ENCODE measurements at regions of chr6 and their contacts with region 1.

Region 1: DNA sequence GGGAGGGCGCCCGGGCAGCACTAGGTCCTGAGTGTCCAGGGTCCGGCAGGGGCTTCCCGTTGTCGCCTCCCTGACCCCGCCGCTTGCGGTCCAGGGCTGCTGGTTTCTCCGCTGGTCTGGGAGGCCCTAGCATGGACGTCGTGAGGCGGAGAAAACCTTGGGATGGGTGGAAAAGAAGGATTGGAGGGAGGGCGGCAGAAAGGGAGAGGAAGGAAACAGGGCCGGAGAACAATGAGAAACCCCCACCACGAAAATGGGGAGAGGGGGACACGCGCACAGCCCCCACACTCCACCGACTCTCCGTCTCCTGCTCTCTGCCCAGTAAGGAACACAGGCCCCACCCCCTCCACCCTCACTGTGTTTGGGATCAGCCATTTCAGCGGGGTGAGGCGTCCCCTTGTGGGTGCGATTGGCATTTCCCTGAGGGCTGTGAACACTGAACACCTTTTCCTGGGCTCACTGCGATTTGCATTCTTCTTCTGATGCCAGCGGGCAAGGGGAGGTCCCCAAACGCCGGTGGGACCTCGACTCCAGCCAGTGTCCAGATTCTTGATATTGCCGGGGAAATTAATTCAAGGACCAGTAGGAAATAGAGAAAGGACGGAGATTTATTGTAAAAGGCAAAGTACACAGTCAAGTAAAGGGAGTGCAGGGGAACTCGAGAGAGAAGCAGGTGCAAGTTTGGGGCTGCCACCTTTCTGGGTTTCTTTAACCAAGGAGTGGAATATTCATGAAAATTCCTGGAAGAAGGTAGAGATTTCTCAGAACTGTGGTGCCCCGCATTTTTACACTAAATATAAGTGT is 3.3 kb upstream of the RAET1G start:
- DNase-seq: peak; percentile 66
- ATAC-seq: peak; percentile 84
- H3K4me3 ChIP-seq: peak overlapping the region; percentile 32
- H3K27ac ChIP-seq: no peak overlapping the region
- H3K4me1 ChIP-seq: peaks cover 2% of the 10 kb centered on the region; the same call in 1 of the 2 replicates
- H3K27me3 ChIP-seq: peaks cover 13% of the 10 kb centered on the region
- CTCF ChIP-seq: peak; percentile 92
- POLR2A ChIP-seq: no peak
- RAD21 ChIP-seq: peak; percentile 92

Region 2: DNA sequence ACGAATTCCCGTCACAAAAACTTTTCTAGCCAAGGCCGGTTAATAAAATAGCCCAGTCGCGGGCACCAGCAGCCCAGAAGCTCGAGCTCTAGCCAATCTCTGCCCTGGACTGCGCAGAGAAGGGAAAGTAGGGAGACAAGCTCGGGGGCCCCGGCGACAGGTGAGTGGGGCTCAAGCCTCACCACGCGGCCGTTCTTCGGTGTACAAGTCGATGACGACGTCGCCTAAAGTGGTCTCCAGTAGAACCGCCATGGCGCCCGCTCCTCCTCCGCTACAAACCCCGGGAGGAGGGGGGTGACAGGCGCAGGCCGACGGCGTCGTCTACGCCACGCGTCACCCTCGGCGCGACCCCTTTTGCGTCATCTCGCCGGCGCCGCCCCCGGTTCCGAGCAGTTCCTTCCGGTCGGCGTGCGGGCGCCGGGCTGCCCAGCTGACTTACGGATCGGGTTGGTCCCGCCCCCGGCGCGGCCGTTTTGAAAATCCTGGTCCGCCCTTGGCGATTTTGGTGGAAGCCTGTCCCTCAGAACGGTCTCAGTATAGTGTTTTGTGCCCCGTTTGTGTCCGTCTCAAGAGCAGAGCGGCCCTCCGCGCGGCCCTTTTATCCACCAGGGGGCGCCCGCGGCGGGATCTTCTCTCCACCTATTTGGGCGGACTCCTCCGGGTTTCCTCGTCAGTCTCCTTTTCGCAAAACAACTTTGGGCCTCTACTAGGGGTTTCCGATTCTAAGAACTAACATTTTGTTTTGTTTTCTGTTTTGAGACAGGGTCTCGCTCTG is 380.2 kb before region 1 on chr6 and contains the start of gene PPIL4:
- CTCF ChIA-PET with region 1: no interaction called
- POLR2A ChIA-PET with region 1: no interaction called
- dilution Hi-C with region 1: no loop called
- in situ Hi-C with region 1: loop called (anchors 10 kb)
- intact Hi-C with region 1: loop called (anchors 1 kb)
- DNase-seq: peak; percentile 94
- ATAC-seq: peak; percentile 93
- H3K4me3 ChIP-seq: peak within 1 kb of the TSS; percentile 79
- H3K27ac ChIP-seq: peak within 1 kb of the TSS; percentile 85
- H3K4me1 ChIP-seq: no peaks in the 10 kb centered on the region; the same call in 1 of the 2 replicates
- H3K27me3 ChIP-seq: peaks cover 3% of the 10 kb centered on the region
- CTCF ChIP-seq: peak; percentile 66
- POLR2A ChIP-seq: peak; percentile 81; the same call in 1 of the 2 replicates
- RAD21 ChIP-seq: peak; percentile 46
- total RNA-seq, gene PPIL4: 13.3 and 29.7 TPM in 2 replicates

Region 3: DNA sequence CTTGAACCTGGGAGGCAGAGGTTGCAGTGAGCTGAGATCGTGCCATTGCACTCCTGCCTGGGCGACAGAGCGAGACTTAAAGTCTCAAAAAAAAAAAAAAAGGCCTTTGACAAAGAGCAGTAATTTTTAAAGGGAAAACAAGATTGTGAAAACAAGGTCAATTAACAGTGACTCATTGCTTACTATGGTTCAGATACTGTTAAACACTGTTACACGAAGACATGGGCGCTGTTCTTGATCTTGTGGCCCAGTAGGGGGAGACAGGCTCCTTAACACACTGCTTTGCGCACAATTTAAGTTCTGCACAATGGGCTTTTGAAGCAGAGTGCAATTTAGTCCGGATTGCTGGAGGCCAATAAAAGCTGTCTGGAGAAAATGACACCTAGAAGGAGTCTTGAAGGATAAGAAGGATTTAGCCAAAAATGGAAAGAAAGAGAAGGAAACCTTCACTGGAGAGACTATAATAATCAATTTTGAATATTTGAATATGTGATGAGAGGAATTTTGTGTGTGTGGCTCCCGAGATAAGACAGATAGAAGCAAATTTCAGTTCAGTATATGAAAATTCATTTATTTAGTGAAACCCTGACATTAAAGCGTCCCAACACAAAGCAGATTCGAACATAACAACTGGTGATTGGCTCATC is 202.3 kb before region 1 on chr6:
- CTCF ChIA-PET with region 1: no interaction called
- POLR2A ChIA-PET with region 1: no interaction called
- dilution Hi-C with region 1: no loop called
- in situ Hi-C with region 1: loop called (anchors 10 kb)
- intact Hi-C with region 1: loop called (anchors 1 kb)
- DNase-seq: peak; percentile 79
- ATAC-seq: peak; percentile 98
- H3K4me3 ChIP-seq: no peak overlapping the region
- H3K27ac ChIP-seq: no peak overlapping the region
- H3K4me1 ChIP-seq: no peaks in the 10 kb centered on the region
- H3K27me3 ChIP-seq: no peaks in the 10 kb centered on the region
- CTCF ChIP-seq: peak; percentile 70
- POLR2A ChIP-seq: no peak
- RAD21 ChIP-seq: peak; percentile 69

Region 4: DNA sequence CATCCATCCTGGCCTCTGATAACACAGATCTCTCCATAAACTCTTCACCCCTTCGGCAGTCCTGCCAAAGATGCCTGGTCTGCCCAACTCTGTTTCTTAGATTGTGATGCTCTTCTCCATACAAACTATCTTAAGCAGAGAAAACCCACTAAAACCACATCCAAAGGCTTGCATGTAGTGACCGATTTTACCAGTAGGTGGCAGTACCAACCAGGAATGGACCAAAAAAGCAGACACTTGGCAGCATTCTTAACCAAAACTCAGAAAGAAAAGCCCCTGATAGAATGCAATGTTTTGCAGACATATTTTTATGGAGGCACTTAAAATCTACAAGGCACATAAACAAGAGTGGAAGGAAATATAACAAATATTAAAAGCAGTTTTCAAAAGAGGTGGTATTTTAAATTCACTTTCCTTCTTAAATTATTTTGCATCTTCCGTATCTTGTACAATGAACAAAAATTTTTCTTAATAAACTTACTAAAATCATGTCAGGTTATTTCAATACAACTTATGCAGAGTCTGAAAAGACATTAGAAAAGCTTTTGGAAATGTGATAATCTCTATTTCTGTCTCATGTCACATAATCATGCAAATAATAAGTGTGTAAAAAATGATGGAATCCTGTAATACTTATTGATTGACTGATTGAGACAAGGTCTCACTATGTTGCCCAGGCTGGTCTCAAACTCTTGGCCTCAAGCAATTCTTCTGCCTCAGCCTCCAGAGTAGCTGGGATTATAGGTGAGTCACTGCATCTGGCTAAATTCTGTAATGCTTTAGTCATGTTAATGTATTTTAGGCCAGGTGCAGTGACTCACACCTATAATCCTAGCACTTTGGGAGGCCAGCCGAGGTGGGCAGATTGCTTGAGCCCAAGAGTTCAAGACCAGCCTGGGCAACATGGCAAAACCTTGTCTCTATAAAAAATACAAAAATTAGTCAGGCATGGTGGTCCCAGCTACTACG is 91.4 kb before region 1 on chr6:
- CTCF ChIA-PET with region 1: interaction called, 4 read pairs
- POLR2A ChIA-PET with region 1: no interaction called
- dilution Hi-C with region 1: no loop called
- in situ Hi-C with region 1: loop called (anchors 5 kb)
- intact Hi-C with region 1: loop called (anchors 1 kb)
- DNase-seq: peak; percentile 79
- ATAC-seq: peak; percentile 74
- H3K4me3 ChIP-seq: no peak overlapping the region
- H3K27ac ChIP-seq: no peak overlapping the region
- H3K4me1 ChIP-seq: peaks cover 6% of the 10 kb centered on the region
- H3K27me3 ChIP-seq: no peaks in the 10 kb centered on the region
- CTCF ChIP-seq: peak; percentile 95
- POLR2A ChIP-seq: no peak
- RAD21 ChIP-seq: peak; percentile 94

Region 5: DNA sequence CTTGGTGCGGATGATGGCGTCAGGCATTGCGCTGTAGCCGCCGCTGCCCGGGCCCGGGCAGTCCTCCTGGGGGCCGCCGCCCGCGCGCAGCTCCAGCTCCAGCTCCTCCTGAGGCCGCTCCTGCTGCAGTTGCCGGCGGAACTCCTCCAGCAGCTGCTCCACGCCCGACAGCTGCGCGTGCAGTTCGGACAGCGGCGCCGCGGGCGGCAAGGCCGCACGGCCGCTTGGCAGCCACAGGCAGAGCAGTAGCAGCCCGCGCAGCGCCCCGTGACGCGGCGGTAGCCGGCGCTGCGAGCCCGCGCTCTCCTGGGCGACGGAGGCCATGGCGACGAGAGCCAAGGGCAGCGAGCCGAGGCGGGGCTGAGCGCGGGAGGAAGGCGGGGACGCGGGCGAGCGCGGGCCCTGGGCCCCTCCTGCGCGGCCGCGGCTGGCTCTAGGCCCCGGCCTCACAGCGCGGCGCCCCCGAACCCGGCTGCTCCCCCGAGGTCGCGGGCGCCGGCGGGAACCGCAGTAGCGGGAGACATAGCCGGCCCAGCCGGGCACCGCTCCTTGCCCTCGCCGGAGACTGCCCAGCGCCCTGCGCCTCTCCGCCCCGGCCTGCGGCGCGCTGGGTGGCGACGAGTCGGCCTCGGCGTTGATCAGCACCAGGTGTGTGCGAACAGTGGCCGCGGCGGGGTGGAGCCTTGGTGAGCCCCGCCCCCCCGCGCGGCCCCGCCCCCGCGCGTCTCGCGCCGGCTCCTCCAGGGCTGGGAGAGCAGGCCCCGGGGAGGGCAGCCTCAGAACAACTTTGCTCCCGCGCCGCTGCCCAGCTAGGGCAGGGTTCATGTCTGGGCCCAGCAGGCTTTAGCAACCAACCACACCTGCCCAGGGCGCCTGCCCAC is 62.2 kb before region 1 on chr6 and contains the start of gene LRP11:
- CTCF ChIA-PET with region 1: no interaction called
- POLR2A ChIA-PET with region 1: no interaction called
- dilution Hi-C with region 1: no loop called
- in situ Hi-C with region 1: loop called (anchors 5 kb)
- intact Hi-C with region 1: loop called (anchors 1 kb)
- DNase-seq: peak; percentile 74
- ATAC-seq: peak; percentile 81
- H3K4me3 ChIP-seq: peak within 1 kb of the TSS; percentile 54
- H3K27ac ChIP-seq: peak within 1 kb of the TSS; percentile 89
- H3K4me1 ChIP-seq: peaks cover 24% of the 10 kb centered on the region
- H3K27me3 ChIP-seq: no peaks in the 10 kb centered on the region
- CTCF ChIP-seq: 0 out of 2 replicates have a peak, but pooled peaks have one; percentile 3
- POLR2A ChIP-seq: peak; percentile 59
- RAD21 ChIP-seq: peak; percentile 1; the same call in 1 of the 2 replicates
- total RNA-seq, gene LRP11: 63.8 and 74.7 TPM in 2 replicates

Region 6: DNA sequence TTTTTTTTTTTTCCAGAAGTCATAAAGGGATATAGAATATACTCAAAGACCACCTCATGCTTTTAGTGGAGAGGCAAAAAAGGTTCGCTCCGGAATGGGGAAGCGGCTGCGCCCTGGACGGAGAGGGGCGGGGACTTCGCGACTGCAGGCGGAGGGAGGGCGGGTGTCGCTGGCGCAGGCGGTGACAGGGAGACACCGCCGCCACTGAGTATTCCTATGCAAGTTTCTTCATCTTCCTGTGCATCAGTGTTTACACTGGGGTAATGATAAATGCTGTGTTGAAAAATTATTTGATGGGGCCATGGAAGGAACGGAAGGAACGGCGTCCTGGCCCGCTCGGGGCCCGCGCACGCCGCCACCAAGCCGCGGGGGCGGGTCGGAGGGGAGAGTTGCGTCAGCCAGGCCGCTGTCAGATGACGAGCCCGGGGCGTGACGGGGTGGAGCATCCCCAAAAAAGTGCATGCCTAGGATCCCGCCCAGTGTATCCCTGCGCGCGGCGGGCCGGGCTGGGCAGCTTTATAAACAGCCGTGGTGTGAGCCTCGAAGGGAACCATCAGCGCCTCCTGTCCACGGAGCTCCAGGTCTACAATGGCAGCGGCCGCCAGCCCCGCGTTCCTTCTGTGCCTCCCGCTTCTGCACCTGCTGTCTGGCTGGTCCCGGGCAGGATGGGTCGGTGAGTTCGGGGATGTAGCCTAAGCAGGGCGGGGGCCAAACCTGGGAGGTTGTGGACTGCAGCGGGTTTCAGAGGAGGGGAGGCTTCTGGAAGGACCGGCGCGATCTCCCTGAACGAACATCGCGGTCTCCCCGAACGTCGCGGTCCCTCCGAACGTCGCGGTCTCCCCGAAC is 37.5 kb after region 1 on chr6 and contains the start of gene ULBP1:
- CTCF ChIA-PET with region 1: no interaction called
- POLR2A ChIA-PET with region 1: no interaction called
- dilution Hi-C with region 1: no loop called
- in situ Hi-C with region 1: no loop called
- intact Hi-C with region 1: no loop called
- DNase-seq: peak; percentile 83
- ATAC-seq: peak; percentile 91
- H3K4me3 ChIP-seq: peak within 1 kb of the TSS; percentile 53
- H3K27ac ChIP-seq: peak within 1 kb of the TSS; percentile 6; the same call in 1 of the 2 replicates
- H3K4me1 ChIP-seq: peaks cover 2% of the 10 kb centered on the region; the same call in 1 of the 2 replicates
- H3K27me3 ChIP-seq: peaks cover 56% of the 10 kb centered on the region
- CTCF ChIP-seq: no peak
- POLR2A ChIP-seq: no peak; the same call in 1 of the 2 replicates
- RAD21 ChIP-seq: no peak
- total RNA-seq, gene ULBP1: 0.18 and 0.56 TPM in 2 replicates

Region 7: GRCh38 chr6:150334790-150335783 is 408.9 kb after region 1 on chr6:
- CTCF ChIA-PET with region 1: no interaction called
- POLR2A ChIA-PET with region 1: no interaction called
- dilution Hi-C with region 1: no loop called
- in situ Hi-C with region 1: loop called (anchors 25 kb)
- intact Hi-C with region 1: loop called (anchors 5 kb)
- DNase-seq: peak; percentile 82
- ATAC-seq: peak; percentile 75
- H3K4me3 ChIP-seq: no peak overlapping the region
- H3K27ac ChIP-seq: no peak overlapping the region
- H3K4me1 ChIP-seq: no peaks in the 10 kb centered on the region
- H3K27me3 ChIP-seq: peaks cover 6% of the 10 kb centered on the region
- CTCF ChIP-seq: peak; percentile 89
- POLR2A ChIP-seq: no peak
- RAD21 ChIP-seq: peak; percentile 90

Measured in IMR-90 (cell line).